ENCODE measurements at regions of chr4 and their contacts with region 1.

Region 1: DNA sequence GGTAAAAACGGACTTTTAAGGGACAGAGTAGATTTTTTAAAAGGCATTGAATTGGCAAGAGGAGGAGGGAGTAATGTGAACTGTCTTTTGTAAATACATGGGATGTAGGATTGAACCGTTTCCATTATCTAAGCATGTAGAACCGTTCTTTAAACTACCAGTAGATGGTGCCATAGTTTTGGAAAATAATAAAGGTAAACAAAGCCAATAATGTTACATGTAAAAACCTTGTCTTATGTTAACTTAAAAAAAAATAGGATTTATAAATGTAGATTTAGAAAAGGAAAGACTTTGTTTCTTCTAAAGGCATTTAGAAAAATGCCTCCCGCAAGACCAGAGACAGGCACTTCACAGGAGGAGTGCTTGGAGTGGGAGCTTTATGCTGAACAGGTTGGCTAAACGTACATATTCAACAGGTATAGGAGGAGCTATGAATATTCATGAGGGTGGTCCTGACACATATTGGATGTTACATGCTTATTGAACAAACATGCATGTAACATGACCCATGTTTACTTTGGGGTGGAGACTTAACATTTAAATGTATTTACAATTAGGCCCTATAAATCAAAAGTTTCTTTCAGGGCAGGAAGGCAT is 45.5 kb upstream of the FAM241A start:
- DNase-seq: peak; percentile 71
- ATAC-seq: peak; percentile 88
- H3K4me3 ChIP-seq: no peak overlapping the region
- H3K27ac ChIP-seq: no peak overlapping the region
- H3K4me1 ChIP-seq: 0 out of 2 replicates have a peak, but pooled peaks cover 5% of the 10 kb centered on the region
- H3K27me3 ChIP-seq: no peaks in the 10 kb centered on the region
- CTCF ChIP-seq: peak; percentile 77

Region 2: DNA sequence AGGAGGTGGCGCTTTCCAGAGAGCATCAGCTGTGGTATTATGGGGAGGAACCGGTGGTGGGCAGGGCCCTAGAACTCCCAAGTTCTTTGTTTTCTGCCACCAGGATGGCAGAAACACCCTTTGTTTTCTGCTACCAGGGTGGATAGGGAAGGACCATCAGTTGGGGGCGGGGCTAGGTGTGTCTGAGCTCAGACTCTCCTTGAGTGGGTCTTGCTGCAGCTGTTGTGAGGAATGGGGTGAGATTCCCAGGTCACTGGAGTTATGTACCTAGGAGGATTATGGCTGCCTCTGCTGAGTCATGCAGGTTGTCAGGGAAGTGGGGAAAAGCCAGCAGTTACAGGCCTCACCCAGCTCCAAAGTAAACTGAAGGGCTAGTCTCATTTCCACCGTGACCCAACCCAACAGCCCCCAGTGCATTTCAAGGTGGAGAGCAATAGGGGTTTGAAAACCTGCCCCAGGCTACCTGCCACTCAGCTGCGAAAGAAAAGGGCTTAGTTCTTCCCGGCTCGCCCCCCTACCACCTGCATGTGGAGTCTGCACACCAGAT is 122.3 kb before region 1 on chr4:
- CTCF ChIA-PET with region 1: no interaction called
- POLR2A ChIA-PET with region 1: no interaction called
- intact Hi-C with region 1: no loop called
- DNase-seq: no peak
- ATAC-seq: no peak
- H3K4me3 ChIP-seq: no peak overlapping the region
- H3K27ac ChIP-seq: no peak overlapping the region
- H3K4me1 ChIP-seq: no peaks in the 10 kb centered on the region
- H3K27me3 ChIP-seq: peaks cover 4% of the 10 kb centered on the region; the same call in 1 of the 2 replicates
- CTCF ChIP-seq: no peak

Region 3: GRCh38 chr4:112075129-112075753 is 24.6 kb before region 1 on chr4:
- CTCF ChIA-PET with region 1: no interaction called
- POLR2A ChIA-PET with region 1: no interaction called
- intact Hi-C with region 1: loop called (anchors 1 kb)
- DNase-seq: peak; percentile 81
- ATAC-seq: peak; percentile 85
- H3K4me3 ChIP-seq: no peak overlapping the region
- H3K27ac ChIP-seq: no peak overlapping the region
- H3K4me1 ChIP-seq: no peaks in the 10 kb centered on the region; the same call in 1 of the 2 replicates
- H3K27me3 ChIP-seq: no peaks in the 10 kb centered on the region
- CTCF ChIP-seq: peak; percentile 77

Region 4: GRCh38 chr4:112145820-112146813 is 46.3 kb after region 1 on chr4:
- CTCF ChIA-PET with region 1: no interaction called
- POLR2A ChIA-PET with region 1: no interaction called
- intact Hi-C with region 1: loop called (anchors 1 kb)
- DNase-seq: peak; percentile 38
- ATAC-seq: peak; percentile 65
- H3K4me3 ChIP-seq: peak overlapping the region; percentile 99
- H3K27ac ChIP-seq: peak overlapping the region; percentile 43; the same call in 1 of the 2 replicates
- H3K4me1 ChIP-seq: peaks cover 9% of the 10 kb centered on the region
- H3K27me3 ChIP-seq: no peaks in the 10 kb centered on the region
- CTCF ChIP-seq: no peak

Region 5: DNA sequence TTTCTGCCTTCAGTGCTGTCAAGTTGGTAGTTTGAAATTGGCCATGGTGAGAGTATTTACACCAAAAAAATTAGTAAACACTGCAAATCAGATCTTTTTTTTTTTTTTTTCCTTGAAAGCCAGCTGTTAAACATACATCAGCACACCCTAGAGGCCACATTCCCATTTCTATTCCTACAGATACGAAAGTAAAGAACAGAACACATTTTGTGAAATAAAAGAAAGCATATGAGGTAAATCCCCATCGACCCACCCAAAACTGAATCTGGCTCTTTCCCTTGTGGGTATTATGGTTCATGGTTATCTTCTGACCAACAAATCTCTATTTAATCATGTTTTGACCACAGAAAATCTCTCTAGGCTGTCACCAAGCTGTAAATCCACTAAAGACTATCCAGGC is 90.0 kb after region 1 on chr4:
- CTCF ChIA-PET with region 1: interaction called, 6 read pairs
- POLR2A ChIA-PET with region 1: no interaction called
- intact Hi-C with region 1: loop called (anchors 1 kb)
- DNase-seq: peak; percentile 18
- ATAC-seq: 0 out of 2 replicates have a peak, but pooled peaks have one; percentile 24
- H3K4me3 ChIP-seq: no peak overlapping the region
- H3K27ac ChIP-seq: no peak overlapping the region
- H3K4me1 ChIP-seq: no peaks in the 10 kb centered on the region
- H3K27me3 ChIP-seq: no peaks in the 10 kb centered on the region
- CTCF ChIP-seq: peak; percentile 55

Region 6: DNA sequence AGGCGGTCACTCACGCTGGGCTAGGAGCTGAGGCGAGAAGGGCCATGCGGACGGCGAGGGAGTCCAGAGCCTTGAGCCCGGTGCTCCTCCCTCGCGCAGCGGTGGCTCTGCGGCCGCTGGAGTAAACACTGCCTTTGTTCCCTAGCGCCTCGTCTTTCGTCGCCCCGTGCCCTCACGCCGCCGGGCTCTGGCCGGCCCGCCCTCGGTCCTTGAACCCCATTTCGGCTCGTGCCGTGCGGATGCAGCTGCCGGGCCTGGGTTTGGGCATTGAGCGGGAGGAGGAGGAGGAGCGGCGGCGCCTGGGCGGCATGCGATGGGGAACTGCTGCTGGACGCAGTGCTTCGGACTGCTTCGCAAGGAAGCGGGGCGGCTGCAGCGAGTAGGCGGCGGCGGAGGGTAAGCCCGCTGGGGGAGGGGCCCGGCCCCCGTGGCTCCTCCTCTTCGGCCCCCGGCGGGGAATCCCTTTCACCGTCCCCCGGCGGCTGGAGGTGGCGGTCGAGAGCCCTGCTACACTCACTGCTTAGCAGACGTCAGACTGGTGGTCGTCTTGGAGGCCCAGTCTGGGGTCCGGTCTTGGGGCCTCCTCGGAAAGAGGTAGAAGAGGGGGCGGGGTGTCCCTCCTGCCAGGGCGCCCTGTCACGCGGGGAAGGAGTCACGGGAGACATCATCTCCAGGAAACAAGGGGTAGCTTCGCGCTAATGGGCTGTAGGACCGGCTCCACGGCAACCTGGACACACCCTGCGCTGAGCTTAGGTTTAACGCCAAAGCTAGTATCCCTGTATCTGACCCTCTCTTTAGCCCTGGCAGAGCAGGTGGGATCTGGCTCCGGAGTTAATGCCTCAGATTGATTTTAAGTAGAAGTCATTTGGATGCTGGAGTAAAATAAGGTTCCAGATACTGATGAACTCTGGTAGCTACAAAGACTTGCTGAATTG is 132.2 kb after region 1 on chr4 and contains the start of gene AP1AR:
- CTCF ChIA-PET with region 1: interaction called, 3 read pairs
- POLR2A ChIA-PET with region 1: no interaction called
- intact Hi-C with region 1: loop called (anchors 1 kb)
- DNase-seq: peak; percentile 66
- ATAC-seq: peak; percentile 60
- H3K4me3 ChIP-seq: peak within 1 kb of the TSS; percentile 99
- H3K27ac ChIP-seq: peak within 1 kb of the TSS; percentile 85
- H3K4me1 ChIP-seq: peaks cover 28% of the 10 kb centered on the region
- H3K27me3 ChIP-seq: no peaks in the 10 kb centered on the region
- CTCF ChIP-seq: peak; percentile 38; the same call in 1 of the 2 replicates
- total RNA-seq, gene AP1AR: 21.3 and 34.6 TPM in 2 replicates